IMR-90 (cell line): ENCODE measurements at regions of chr11 and their contacts with region 1.

Region 1: GRCh38 chr11:86456052-86456939 is 81.6 kb downstream of the CCDC81 start:
- DNase-seq: peak; percentile 80
- ATAC-seq: peak; percentile 78
- H3K4me3 ChIP-seq: no peak overlapping the region
- H3K27ac ChIP-seq: no peak overlapping the region
- H3K4me1 ChIP-seq: peaks cover 22% of the 10 kb centered on the region
- H3K27me3 ChIP-seq: no peaks in the 10 kb centered on the region
- CTCF ChIP-seq: peak; percentile 96
- POLR2A ChIP-seq: peak; percentile 51; the same call in 1 of the 2 replicates
- RAD21 ChIP-seq: peak; percentile 99

Region 2: DNA sequence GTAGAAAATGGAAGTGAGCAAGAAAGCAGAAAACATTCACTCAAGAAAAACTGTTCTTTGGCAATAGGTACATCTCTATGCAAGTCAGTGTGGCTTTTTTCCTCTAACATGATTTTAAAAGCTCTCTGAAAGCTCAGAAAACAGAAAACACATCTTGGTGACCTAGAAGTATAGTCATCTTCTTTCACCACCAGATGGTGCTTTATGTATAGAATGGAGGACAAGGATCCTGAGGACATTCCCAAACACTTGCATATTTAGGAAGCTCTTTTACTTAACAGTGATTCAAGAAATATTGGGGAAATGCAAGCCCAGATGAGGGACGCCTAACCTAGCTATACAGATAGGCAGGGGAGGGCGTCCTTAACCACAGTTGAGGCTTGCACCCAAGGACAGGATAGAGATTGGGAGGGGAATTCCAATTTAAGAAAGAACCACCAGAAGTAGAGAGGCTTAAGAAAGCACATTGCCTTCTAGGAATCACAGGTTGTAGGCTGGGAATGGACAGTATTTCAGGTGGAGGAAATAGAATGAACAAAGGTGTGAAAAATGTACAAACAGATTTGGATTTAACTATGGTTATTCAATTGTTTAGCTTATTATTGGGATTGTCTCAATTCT is 95.4 kb before region 1 on chr11:
- CTCF ChIA-PET with region 1: no interaction called
- POLR2A ChIA-PET with region 1: no interaction called
- dilution Hi-C with region 1: no loop called
- in situ Hi-C with region 1: no loop called
- intact Hi-C with region 1: loop called (anchors 1 kb)
- DNase-seq: peak; percentile 73
- ATAC-seq: peak; percentile 89
- H3K4me3 ChIP-seq: no peak overlapping the region
- H3K27ac ChIP-seq: no peak overlapping the region
- H3K4me1 ChIP-seq: peaks cover 3% of the 10 kb centered on the region; the same call in 1 of the 2 replicates
- H3K27me3 ChIP-seq: no peaks in the 10 kb centered on the region
- CTCF ChIP-seq: peak; percentile 63
- POLR2A ChIP-seq: no peak
- RAD21 ChIP-seq: peak; percentile 68

Region 3: GRCh38 chr11:86608251-86608799 is 152.0 kb after region 1 on chr11:
- CTCF ChIA-PET with region 1: interaction called, 4 read pairs
- POLR2A ChIA-PET with region 1: no interaction called
- dilution Hi-C with region 1: no loop called
- in situ Hi-C with region 1: loop called (anchors 5 kb)
- intact Hi-C with region 1: loop called (anchors 1 kb)
- DNase-seq: peak; percentile 80
- ATAC-seq: peak; percentile 73
- H3K4me3 ChIP-seq: no peak overlapping the region
- H3K27ac ChIP-seq: no peak overlapping the region
- H3K4me1 ChIP-seq: peaks cover 5% of the 10 kb centered on the region
- H3K27me3 ChIP-seq: no peaks in the 10 kb centered on the region
- CTCF ChIP-seq: peak; percentile 75
- POLR2A ChIP-seq: no peak
- RAD21 ChIP-seq: peak; percentile 59

Region 4: GRCh38 chr11:86740709-86741483 is 284.6 kb after region 1 on chr11:
- CTCF ChIA-PET with region 1: no interaction called
- POLR2A ChIA-PET with region 1: no interaction called
- dilution Hi-C with region 1: no loop called
- in situ Hi-C with region 1: no loop called
- intact Hi-C with region 1: loop called (anchors 5 kb)
- DNase-seq: peak; percentile 98
- ATAC-seq: peak; percentile 58
- H3K4me3 ChIP-seq: no peak overlapping the region
- H3K27ac ChIP-seq: peak overlapping the region; percentile 97
- H3K4me1 ChIP-seq: peaks cover 37% of the 10 kb centered on the region
- H3K27me3 ChIP-seq: no peaks in the 10 kb centered on the region
- CTCF ChIP-seq: no peak
- POLR2A ChIP-seq: 0 out of 2 replicates have a peak, but pooled peaks have one; percentile 2
- RAD21 ChIP-seq: no peak

Region 5: GRCh38 chr11:86818466-86819192 is 362.3 kb after region 1 on chr11:
- CTCF ChIA-PET with region 1: no interaction called
- POLR2A ChIA-PET with region 1: no interaction called
- dilution Hi-C with region 1: no loop called
- in situ Hi-C with region 1: loop called (anchors 5 kb)
- intact Hi-C with region 1: loop called (anchors 1 kb)
- DNase-seq: peak; percentile 81
- ATAC-seq: peak; percentile 48
- H3K4me3 ChIP-seq: no peak overlapping the region
- H3K27ac ChIP-seq: no peak overlapping the region
- H3K4me1 ChIP-seq: peaks cover 15% of the 10 kb centered on the region
- H3K27me3 ChIP-seq: no peaks in the 10 kb centered on the region
- CTCF ChIP-seq: peak; percentile 87
- POLR2A ChIP-seq: 0 out of 2 replicates have a peak, but pooled peaks have one; percentile 39
- RAD21 ChIP-seq: peak; percentile 94